ENCODE measurements at regions of chr9 and their contacts with region 1.

Region 1: GRCh38 chr9:35116898-35117551 is 1.4 kb upstream of the ATOSB start:
- DNase-seq: peak; percentile 92 to 97 (median 94)
- ATAC-seq: peak; percentile 78
- H3K4me3 ChIP-seq: peak overlapping the region in 1 of 2 donors; percentile 21
- H3K27ac ChIP-seq: peak overlapping the region; percentile 60 to 87 (median 84)
- H3K4me1 ChIP-seq: peaks cover 29% of the 10 kb centered on the region
- H3K27me3 ChIP-seq: no peaks in the 10 kb centered on the region
- CTCF ChIP-seq: peak; percentile 94 to 98 (median 97)
- POLR2A ChIP-seq: no peak

Region 2: GRCh38 chr9:35260186-35260585 is 143.2 kb after region 1 on chr9:
- intact Hi-C with region 1: loop called (anchors 5 kb)
- DNase-seq: no peak
- ATAC-seq: no peak
- H3K4me3 ChIP-seq: no peak overlapping the region
- H3K27ac ChIP-seq: no peak overlapping the region
- H3K4me1 ChIP-seq: peaks cover 23% of the 10 kb centered on the region
- H3K27me3 ChIP-seq: no peaks in the 10 kb centered on the region
- CTCF ChIP-seq: no peak
- POLR2A ChIP-seq: no peak

Region 3: DNA sequence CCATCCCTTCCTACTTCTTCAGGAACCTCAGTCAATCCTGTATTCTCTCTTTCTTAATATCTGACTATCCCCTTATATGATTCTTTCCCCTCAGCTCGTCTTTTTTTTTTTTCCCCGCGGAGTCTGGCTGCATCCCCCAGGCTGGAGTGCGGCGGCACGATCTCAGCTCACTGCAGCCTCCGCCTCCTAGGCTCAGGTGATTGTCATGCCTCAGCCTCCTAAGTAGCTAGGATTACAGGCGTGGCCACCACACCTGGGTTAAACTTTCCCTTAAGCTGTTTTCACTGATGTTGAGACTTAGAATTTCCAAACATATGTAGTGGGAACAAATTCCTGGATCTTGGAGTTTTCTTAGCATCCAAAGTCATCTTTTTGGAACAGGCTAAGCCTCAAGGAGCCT is 359.6 kb after region 1 on chr9:
- intact Hi-C with region 1: loop called (anchors 5 kb)
- DNase-seq: no peak
- ATAC-seq: no peak
- H3K4me3 ChIP-seq: no peak overlapping the region
- H3K27ac ChIP-seq: peak overlapping the region in 2 of 4 donors; percentile 50 to 72
- H3K4me1 ChIP-seq: peaks cover 7% of the 10 kb centered on the region
- H3K27me3 ChIP-seq: no peaks in the 10 kb centered on the region
- CTCF ChIP-seq: no peak
- POLR2A ChIP-seq: no peak

Measured in body of pancreas (tissue), 4 donors.